ENCODE measurements at regions of chr1 and their contacts with region 1.

Region 1: DNA sequence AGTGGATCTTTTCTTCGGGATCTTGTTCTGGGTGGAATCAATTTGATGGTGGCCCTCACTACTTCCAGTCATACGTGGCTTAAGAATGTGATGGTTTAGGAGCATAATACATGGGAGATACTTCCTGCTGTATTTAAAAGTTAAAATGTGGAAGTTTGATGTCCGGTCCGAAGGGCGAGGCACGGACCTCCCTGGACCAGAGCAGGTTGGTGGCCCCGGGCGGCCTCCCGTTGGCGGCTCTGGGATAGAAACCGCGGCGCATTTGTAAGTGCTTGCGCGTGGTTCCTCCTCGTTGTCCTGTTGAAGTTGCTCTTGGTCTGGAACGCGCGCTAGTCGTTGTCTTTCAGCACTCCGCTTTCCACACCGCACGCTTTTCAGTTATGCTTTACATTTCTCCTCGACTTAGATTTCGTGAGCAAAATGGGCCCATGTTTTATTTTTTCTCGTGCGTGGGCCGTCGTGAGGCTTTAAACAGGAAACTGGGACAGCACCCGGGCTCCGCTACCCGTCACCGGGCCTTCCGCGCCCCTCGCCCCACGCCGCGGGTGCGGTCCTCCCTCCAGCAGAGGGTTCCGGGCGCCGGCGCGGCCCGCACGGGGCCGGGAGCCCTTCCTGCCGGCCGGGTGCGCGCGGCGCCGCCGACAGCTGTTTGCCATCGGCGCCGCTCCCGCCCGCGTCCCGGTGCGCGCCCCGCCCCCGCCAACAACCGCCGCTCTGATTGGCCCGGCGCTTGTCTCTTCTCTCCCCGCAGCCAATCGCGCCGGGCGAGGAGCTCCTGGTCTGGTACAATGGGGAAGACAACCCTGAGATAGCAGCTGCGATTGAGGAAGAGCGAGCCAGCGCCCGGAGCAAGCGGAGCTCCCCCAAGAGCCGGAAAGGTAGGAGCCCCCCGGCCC is 48.9 kb downstream of the PRDM2 start:
- DNase-seq: peak; percentile 94
- H3K4me3 Mint-ChIP-seq: peak overlapping the region; percentile 81
- H3K27ac Mint-ChIP-seq: peak overlapping the region; percentile 85
- H3K4me1 Mint-ChIP-seq: peaks cover 44% of the 10 kb centered on the region
- H3K27me3 Mint-ChIP-seq: no peaks in the 10 kb centered on the region

Region 2: GRCh38 chr1:13699936-13700520 is 48.8 kb before region 1 on chr1 and contains the start of gene PRDM2:
- CTCF ChIA-PET with region 1: interaction called, 4 read pairs
- intact Hi-C with region 1: loop called (anchors 1 kb)
- DNase-seq: peak; percentile 49
- H3K4me3 Mint-ChIP-seq: peak within 1 kb of the TSS; percentile 88
- H3K27ac Mint-ChIP-seq: peak within 1 kb of the TSS; percentile 94
- H3K4me1 Mint-ChIP-seq: peaks cover 42% of the 10 kb centered on the region
- H3K27me3 Mint-ChIP-seq: no peaks in the 10 kb centered on the region
- total RNA-seq, gene PRDM2: 33.8 to 37.3 TPM

Region 3: GRCh38 chr1:13792419-13792818 is 43.6 kb after region 1 on chr1:
- CTCF ChIA-PET with region 1: interaction called, 3 read pairs
- intact Hi-C with region 1: loop called (anchors 5 kb)
- DNase-seq: no peak
- H3K4me3 Mint-ChIP-seq: no peak overlapping the region
- H3K27ac Mint-ChIP-seq: no peak overlapping the region
- H3K4me1 Mint-ChIP-seq: peaks cover 76% of the 10 kb centered on the region
- H3K27me3 Mint-ChIP-seq: no peaks in the 10 kb centered on the region

Measured in activated naive CD4-positive, alpha-beta T cell treated with anti-CD3 and anti-CD28 coated beads for 36 hours (primary cell).